ENCODE measurements at regions of chr12 and their contacts with region 1.

Region 1: GRCh38 chr12:27243804-27244683 is at the start of gene STK38L:
- DNase-seq: peak; percentile 93 to 100
- H3K4me3 ChIP-seq: peak within 1 kb of the TSS; percentile 64
- H3K27ac ChIP-seq: peak within 1 kb of the TSS; percentile 75
- H3K4me1 ChIP-seq: peaks cover 19% of the 10 kb centered on the region
- H3K27me3 ChIP-seq: no peaks in the 10 kb centered on the region
- CTCF ChIP-seq: peak; percentile 56
- total RNA-seq, gene STK38L: 34.7 and 40.0 TPM in 2 replicates

Region 2: GRCh38 chr12:27034607-27035293 is 209.3 kb before region 1 on chr12:
- CTCF ChIA-PET with region 1: no interaction called
- POLR2A ChIA-PET with region 1: no interaction called
- intact Hi-C with region 1: loop called (anchors 1 kb)
- DNase-seq: no peak
- H3K4me3 ChIP-seq: no peak overlapping the region
- H3K27ac ChIP-seq: no peak overlapping the region
- H3K4me1 ChIP-seq: no peaks in the 10 kb centered on the region
- H3K27me3 ChIP-seq: no peaks in the 10 kb centered on the region
- CTCF ChIP-seq: no peak

Region 3: DNA sequence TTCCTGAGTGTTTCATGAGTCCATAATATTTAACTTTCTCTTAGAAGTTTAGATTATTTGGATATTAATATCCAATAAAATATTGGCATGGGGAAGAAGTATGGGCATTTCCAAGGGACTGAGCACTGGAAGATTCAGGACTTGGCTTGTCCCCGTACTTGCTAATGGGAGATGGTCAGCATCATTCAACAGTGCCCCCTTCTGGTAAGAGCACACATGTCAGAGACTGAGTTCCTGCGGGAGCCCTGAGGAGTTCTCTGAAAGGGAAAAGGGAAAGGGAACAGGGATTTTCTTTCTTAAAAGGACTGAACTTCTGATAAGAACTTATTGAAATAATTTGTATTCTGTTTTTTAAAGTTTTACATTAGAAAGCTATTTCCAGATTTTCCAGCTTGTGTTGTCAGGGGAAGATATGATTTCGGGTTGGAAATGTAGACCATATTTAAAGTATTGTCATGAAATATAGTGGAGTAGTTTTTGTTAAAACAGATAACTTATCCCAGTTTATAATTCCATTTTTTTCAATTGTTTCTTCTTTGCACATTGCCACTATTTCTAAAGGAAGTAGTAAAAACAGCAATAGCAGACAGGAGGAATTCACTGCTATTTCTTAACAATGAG is 101.8 kb before region 1 on chr12:
- CTCF ChIA-PET with region 1: interaction called, 3 read pairs
- POLR2A ChIA-PET with region 1: no interaction called
- intact Hi-C with region 1: loop called (anchors 1 kb)
- DNase-seq: peak; percentile 44 to 64
- H3K4me3 ChIP-seq: no peak overlapping the region
- H3K27ac ChIP-seq: no peak overlapping the region
- H3K4me1 ChIP-seq: no peaks in the 10 kb centered on the region
- H3K27me3 ChIP-seq: no peaks in the 10 kb centered on the region
- CTCF ChIP-seq: peak; percentile 89

Region 4: DNA sequence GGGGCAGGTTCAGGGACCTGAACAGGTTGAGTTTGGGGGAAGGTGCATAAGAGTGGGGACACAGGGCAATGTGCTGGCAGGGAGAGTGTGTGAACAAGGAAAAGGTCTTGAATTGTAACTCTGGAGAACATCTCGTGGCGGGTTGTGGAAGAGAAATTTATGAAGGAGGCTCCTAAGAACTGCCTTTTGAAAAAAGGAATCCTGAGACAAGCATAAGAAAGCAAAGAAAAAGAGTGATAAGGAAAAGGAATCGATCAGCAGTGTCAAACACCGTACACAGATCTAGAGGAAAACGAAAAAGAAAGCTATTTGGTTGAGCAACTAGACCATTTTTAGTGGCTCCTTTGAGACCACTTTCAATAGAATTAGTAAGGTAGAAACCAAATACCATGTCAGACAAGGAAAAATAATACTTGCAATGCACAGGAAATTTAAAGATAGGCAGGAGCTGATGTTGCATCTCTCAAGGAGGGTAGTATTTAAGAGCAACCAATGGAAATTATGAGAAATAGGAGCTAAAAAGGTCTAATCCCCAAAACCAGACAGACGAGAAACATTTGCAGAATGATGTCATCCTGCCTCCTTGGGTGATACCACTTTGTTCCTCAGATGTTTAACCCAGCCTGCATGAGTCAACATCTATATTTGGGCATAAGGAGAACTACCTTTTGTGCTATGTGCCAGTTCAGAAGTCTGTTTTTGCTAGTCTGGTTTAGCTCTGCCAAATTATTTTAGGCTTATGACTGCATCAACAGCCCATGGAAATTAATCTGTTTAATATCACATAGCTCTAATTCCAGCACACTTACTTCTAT is 64.4 kb before region 1 on chr12:
- CTCF ChIA-PET with region 1: no interaction called
- POLR2A ChIA-PET with region 1: interaction called, 7 read pairs
- intact Hi-C with region 1: loop called (anchors 1 kb)
- DNase-seq: peak; percentile 73 to 97
- H3K4me3 ChIP-seq: no peak overlapping the region
- H3K27ac ChIP-seq: peak overlapping the region; percentile 90
- H3K4me1 ChIP-seq: peaks cover 66% of the 10 kb centered on the region
- H3K27me3 ChIP-seq: no peaks in the 10 kb centered on the region
- CTCF ChIP-seq: no peak

Region 5: GRCh38 chr12:27190765-27191517 is 53.1 kb before region 1 on chr12:
- CTCF ChIA-PET with region 1: no interaction called
- POLR2A ChIA-PET with region 1: interaction called, 12 read pairs
- intact Hi-C with region 1: loop called (anchors 2 kb)
- DNase-seq: peak in 1 of 2 experiments; percentile 86
- H3K4me3 ChIP-seq: 0 out of 2 replicates have a peak overlapping the region, but pooled peaks have one; percentile 19
- H3K27ac ChIP-seq: peak overlapping the region; percentile 79
- H3K4me1 ChIP-seq: peaks cover 36% of the 10 kb centered on the region
- H3K27me3 ChIP-seq: no peaks in the 10 kb centered on the region
- CTCF ChIP-seq: no peak

Region 6: GRCh38 chr12:27284751-27285150 is 40.7 kb after region 1 on chr12:
- CTCF ChIA-PET with region 1: no interaction called
- POLR2A ChIA-PET with region 1: interaction called, 12 read pairs
- intact Hi-C with region 1: no loop called
- DNase-seq: no peak
- H3K4me3 ChIP-seq: no peak overlapping the region
- H3K27ac ChIP-seq: no peak overlapping the region
- H3K4me1 ChIP-seq: no peaks in the 10 kb centered on the region
- H3K27me3 ChIP-seq: no peaks in the 10 kb centered on the region
- CTCF ChIP-seq: no peak

Measured in PC-9 (cell line).